Colonic mucosa (tissue), 4 donors: ENCODE measurements at regions of chr10 and their contacts with region 1.

Region 1: DNA sequence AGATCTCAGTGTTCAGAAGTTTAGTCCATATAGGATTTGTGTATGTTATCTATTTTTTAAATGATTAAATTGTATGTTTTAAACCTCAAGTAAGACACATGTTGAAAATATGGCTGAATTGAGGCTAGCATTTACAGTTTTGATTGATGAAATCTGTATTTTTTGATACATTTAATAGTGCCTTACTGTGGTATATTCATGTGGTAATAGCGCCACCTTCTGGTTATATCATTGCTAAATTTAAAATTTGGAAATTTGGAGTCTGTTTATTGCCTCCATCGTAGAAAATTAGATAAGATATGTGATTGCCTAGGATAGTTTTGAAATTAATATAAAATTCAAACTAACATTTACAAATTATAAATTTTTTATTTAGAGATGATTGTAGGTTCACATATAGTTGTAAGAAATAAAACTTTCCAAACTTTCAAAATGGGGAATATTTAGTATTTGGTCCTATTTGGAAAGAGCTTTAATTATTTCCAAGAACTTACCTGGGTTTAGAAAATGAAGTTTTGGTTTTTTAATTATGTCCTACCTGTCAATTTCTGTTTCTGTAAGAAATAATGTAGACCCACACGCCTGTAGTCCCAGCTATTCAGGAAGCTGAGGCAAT is 19.1 kb upstream of the ARMS2 start:
- DNase-seq: no peak
- H3K4me3 ChIP-seq: no peak overlapping the region
- H3K27ac ChIP-seq: no peak overlapping the region
- H3K4me1 ChIP-seq: no peaks in the 10 kb centered on the region
- H3K27me3 ChIP-seq: no peaks in the 10 kb centered on the region
- CTCF ChIP-seq: peak; percentile 58

Region 2: DNA sequence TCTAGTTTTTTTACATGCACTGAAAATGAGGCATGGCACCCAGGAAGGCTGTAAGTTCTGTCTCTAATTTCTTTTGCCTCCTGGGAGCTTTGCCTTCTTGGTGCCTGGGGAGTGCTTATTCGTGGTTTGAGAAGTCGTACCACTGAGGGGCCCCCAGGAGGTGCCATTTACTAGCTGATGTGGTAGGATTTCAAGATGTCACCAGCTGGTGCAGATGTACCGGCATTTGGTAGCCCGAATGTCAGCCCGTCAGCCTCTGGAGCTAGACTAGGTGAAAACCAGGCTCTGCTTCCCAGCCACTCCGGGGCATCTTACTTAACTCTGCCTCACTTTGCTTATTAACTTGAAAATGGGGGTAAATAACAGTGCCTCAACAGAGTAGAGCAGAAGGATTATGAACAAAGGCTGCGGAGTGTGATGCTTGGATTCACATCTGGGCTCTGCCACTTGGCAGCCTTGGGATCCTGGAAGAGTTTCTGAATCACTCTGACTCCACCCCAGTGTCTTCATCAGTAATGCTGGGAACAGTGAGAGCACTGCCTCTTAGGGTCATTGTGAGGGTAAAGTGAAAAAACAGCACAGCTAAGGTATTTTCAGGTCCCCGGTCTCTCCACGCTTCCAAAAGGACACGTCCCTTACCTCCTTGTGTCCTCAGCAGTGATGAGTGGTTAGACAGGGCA is 195.6 kb before region 1 on chr10:
- intact Hi-C with region 1: no loop called
- DNase-seq: no peak
- H3K4me3 ChIP-seq: no peak overlapping the region
- H3K27ac ChIP-seq: no peak overlapping the region
- H3K4me1 ChIP-seq: no peaks in the 10 kb centered on the region
- H3K27me3 ChIP-seq: no peaks in the 10 kb centered on the region
- CTCF ChIP-seq: no peak

Region 3: GRCh38 chr10:122298598-122299301 is 136.6 kb before region 1 on chr10:
- intact Hi-C with region 1: loop called (anchors 2 kb)
- DNase-seq: peak; percentile 83
- H3K4me3 ChIP-seq: no peak overlapping the region
- H3K27ac ChIP-seq: no peak overlapping the region
- H3K4me1 ChIP-seq: no peaks in the 10 kb centered on the region
- H3K27me3 ChIP-seq: no peaks in the 10 kb centered on the region
- CTCF ChIP-seq: peak; percentile 96

Region 4: GRCh38 chr10:122342293-122343134 is 92.8 kb before region 1 on chr10:
- intact Hi-C with region 1: loop called (anchors 5 kb)
- DNase-seq: peak; percentile 53
- H3K4me3 ChIP-seq: no peak overlapping the region
- H3K27ac ChIP-seq: no peak overlapping the region
- H3K4me1 ChIP-seq: peaks cover 4% of the 10 kb centered on the region
- H3K27me3 ChIP-seq: no peaks in the 10 kb centered on the region
- CTCF ChIP-seq: peak; percentile 67

Region 5: DNA sequence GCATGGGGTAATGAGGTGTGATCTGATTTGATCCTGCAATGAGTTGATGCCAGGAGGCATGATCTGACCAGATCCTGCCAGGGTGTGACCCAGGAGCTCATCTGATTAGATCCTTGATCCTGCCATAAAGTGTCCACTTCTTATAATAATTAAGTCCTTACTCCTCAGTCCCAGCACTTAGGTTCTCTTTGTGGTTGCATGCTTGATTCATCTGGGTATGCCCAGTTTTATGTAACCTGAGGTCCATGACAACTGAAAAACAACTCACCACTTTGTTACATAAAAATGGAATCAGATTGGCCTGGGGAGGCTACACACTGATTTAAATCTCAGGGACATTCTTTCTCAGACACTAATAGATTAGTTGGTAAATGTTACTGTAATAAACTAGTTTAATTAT is 592.5 kb after region 1 on chr10:
- intact Hi-C with region 1: no loop called
- DNase-seq: no peak
- H3K4me3 ChIP-seq: no peak overlapping the region
- H3K27ac ChIP-seq: no peak overlapping the region
- H3K4me1 ChIP-seq: no peaks in the 10 kb centered on the region
- H3K27me3 ChIP-seq: no peaks in the 10 kb centered on the region
- CTCF ChIP-seq: no peak